GM18951 (cell line): ENCODE measurements at regions of chr12 and their contacts with region 1.

Region 1: DNA sequence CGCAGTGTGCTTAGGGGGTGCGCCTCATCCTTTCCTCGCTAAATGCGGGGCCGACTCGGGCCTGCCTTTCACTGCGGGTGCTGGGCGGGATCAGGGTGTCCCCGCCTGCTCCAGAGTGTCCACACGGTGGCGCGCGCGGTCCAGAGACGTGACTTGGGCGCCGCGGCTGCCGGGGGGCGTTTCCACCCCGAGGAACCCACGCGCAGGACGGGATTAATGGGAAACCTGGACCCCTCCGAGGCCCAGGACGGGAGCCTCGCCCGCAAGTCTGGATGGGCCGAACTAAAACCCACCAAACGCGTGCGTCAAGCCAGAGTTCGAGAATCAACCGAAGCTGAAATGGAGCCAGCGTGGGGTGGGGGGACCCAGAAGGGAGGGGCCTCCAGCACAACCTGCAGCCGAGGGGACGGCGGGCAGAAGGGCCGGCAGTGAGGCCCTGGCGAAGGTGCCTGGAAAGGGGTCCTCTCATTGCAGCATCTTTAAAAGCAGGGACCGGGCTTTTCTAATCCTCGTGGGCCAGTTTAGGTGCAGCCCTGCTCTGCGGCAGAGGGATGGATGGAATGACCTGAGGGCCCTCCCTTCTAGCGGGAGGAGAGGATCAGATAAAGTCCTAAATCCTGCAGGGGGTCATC is 93.3 kb downstream of the NINJ2 start:
- POLR2A ChIP-seq: no peak

Region 2: DNA sequence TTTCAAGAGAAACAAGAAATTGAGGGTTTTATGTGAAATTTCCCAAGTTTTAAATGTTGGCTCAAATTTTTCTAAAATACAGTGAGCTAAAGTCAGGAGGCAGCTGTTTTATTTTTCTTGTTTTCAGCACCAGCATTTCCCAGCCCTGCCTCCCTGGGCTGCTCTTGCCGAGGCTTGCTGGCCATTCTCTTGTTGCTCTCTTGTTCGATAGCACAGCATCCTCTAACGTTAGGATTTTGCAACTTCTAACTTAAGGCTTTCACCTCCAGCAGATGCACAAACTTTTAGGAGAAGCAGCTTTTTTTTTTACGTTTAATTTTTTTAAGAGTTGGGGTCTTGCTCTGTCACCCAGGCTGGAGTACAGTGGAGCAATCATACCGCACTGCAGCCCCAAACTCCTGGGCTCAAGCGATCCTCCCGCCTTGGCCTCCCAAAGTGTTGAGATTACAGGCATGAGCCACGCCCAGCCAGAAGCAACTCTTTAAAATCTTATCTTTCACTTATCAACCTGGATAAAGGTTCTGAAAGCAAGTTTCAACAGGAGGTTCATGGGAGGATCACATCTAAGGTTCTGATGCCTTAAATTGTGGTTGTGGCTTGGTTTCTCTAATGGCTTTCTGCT is 70.0 kb before region 1 on chr12:
- in situ Hi-C with region 1: no loop called
- POLR2A ChIP-seq: no peak

Region 3: GRCh38 chr12:949453-950191 is 379.7 kb after region 1 on chr12 and contains the start of gene RAD52:
- in situ Hi-C with region 1: loop called (anchors 10 kb)
- POLR2A ChIP-seq: peak; percentile 90

Region 4: GRCh38 chr12:1093166-1093751 is 523.3 kb after region 1 on chr12:
- in situ Hi-C with region 1: loop called (anchors 25 kb)
- POLR2A ChIP-seq: no peak